ENCODE measurements at regions of chr5 and their contacts with region 1.

Region 1: DNA sequence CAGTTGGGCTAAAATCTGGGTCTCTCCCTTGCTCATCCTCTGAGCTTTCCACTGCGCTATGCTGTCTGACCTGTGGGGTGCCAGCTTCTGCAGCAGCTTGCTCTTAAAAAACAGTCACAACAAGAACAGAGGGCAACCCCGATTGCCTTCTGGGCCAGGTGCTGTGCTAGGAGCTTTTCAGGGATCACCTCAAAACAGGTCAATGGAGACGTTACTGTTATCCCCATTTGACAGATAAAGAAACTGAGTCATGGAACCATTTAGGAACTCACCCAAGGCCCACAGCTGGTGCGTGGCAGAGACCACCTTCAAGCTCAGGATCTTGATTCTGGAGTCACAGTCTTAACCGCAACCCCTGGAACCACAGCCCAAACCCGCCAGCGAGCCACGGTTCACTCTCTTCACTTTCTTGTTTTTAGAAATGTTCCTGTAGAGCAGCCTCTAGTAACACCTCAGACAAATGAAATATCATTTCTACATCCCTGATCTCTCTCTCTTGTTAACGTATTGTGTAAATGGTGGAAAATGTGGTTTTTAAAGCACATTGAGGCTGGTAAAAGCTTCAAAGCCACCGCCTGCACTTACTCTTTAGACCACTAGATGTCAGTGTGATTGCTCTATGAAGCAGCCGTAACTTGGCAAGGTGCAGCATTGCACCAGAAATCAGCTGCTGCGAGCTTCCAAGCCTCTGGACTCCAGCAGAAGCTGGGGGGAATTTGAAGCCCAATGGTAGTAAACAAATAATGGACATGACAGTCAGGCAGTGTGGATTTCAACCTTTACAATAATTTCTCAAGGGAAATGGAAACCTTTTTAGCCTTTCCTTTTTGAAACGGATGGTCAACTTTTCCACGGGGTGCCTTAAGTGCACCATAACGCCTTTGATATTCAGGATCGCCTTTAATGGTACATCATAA is 1.7 kb downstream of the FYB1 start:
- DNase-seq: peak; percentile 57
- H3K4me3 ChIP-seq: no peak overlapping the region
- H3K27ac ChIP-seq: no peak overlapping the region
- H3K27me3 ChIP-seq: no peaks in the 10 kb centered on the region
- CTCF ChIP-seq: peak; percentile 98

Region 2: GRCh38 chr5:39186722-39187539 is 30.7 kb before region 1 on chr5:
- CTCF ChIA-PET with region 1: interaction called, 10 read pairs
- POLR2A ChIA-PET with region 1: no interaction called
- DNase-seq: no peak
- H3K4me3 ChIP-seq: no peak overlapping the region
- H3K27ac ChIP-seq: no peak overlapping the region
- H3K27me3 ChIP-seq: no peaks in the 10 kb centered on the region
- CTCF ChIP-seq: no peak

Region 3: DNA sequence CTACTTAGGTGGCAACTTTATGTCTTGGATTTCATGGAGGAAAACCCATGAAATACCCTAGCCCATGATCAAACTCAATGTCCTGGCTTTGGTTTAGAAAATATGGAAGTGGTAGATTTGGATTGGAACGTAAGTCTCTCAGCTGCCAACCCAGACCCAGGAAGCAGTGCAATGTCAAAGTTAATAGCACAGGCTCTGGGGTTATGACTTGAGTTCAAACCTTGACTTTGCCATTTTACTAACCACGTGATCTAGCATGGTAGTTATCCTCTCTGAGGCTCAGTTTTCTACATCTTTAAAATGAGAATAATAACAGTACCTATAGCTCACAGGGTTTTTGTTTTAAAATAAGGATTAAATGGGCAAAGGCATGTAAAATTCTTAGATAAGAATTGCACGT is 12.1 kb before region 1 on chr5:
- CTCF ChIA-PET with region 1: interaction called, 29 read pairs
- POLR2A ChIA-PET with region 1: no interaction called
- DNase-seq: no peak
- H3K4me3 ChIP-seq: no peak overlapping the region
- H3K27ac ChIP-seq: no peak overlapping the region
- H3K27me3 ChIP-seq: no peaks in the 10 kb centered on the region
- CTCF ChIP-seq: no peak

Region 4: DNA sequence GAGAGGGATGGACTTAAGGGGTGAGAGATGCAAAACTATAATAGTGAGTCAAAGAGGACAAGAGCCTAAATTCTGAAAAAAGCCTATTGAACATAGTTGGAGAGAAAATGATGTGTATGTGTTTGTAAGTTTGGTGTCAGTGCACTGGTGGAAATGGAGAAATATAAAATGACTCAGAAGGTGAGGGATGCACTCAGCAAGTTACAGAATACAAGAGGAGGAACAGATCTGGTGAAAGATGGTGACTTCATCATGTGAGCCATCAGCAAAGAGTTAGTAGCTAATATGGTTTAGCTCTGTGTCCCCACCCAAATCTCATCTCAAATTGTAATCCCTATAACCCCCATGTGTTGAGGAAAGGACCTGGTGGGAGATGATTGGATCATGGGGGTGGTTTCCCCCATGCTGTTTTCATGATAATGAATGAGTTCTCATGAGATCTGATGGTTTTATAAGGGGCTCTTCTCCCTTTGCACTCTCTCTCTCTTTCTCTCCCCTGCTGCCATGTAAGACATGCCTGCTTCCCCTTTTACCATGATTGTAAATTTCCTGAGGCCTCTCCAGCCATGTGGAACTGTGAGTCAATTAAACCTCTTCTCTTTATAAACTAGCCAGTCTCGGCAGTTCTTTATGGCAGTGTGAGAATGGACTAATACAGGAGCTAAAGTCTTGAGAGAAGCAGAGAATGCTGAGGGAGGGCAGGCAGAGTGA is 32.1 kb after region 1 on chr5:
- CTCF ChIA-PET with region 1: interaction called, 14 read pairs
- POLR2A ChIA-PET with region 1: no interaction called
- DNase-seq: no peak
- H3K4me3 ChIP-seq: no peak overlapping the region
- H3K27ac ChIP-seq: no peak overlapping the region
- H3K27me3 ChIP-seq: peaks cover 3% of the 10 kb centered on the region
- CTCF ChIP-seq: no peak

Region 5: DNA sequence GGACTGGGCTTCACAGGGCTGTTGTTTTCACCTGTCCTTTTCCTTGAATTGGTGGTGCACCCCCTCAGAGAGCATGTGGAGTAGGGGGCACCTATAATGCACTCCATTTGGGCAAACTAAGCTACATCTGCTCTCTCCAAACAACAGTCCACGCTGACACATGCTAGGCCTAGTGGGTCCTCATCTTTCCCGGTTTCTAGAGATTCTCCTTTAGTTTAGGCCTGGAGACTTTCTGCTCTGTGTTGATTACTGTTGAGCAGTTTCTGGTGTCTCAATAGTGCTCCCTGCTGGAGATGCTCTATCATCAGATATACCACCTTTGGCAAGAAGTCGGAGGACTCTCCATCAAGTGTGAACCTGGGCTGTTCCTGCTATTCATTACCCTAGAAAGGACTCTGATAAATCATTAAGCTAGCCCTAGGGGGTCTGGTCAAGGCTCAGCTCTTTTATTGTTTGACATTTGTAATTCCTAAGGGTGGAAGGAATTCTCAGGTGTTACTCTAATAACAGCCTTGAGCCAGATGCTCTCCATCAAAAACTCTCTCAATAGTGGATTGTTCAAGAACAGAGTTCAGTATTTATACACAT is 65.7 kb after region 1 on chr5:
- CTCF ChIA-PET with region 1: interaction called, 54 read pairs
- POLR2A ChIA-PET with region 1: no interaction called
- DNase-seq: peak; percentile 29
- H3K4me3 ChIP-seq: no peak overlapping the region
- H3K27ac ChIP-seq: no peak overlapping the region
- H3K27me3 ChIP-seq: no peaks in the 10 kb centered on the region
- CTCF ChIP-seq: peak; percentile 81